ENCODE measurements at regions of chr18 and their contacts with region 1.

Region 1: DNA sequence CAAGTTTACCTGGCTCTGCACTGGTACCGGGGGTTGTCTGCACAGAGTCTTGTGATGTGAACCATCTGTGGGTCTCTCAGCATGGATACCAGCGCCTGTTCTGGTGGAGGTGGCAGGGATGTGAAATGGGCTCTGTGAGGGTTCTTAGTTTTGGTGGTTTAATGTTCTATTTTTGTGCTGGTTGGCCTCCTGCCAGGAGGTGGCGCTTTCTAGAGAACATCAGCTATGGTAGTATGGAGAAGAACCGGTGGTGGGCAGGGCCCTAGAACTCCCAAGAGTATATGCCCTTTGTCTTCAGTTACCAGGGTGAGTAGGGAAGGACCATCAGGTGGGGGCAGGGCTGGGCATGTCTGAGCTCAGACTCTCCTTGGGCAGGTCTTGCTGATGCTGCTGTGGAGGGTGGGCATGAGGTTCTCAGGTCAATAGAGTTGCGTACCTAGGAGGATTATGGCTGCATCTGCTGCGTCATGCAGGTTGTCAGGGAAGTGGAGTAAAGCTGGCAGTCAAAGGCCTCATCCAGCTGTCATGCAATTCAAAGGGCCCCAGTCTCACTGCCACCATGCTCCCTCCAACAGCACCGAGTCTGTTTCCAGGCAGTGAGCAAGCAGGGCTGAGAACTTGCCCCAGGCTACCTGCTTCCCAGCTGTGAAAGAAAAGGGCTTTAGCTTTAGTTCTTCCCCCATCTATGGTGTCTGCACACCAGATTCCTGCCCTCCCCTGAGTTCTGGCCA is 278.0 kb downstream of the METTL4 start:
- DNase-seq: no peak
- ATAC-seq: no peak
- H3K4me3 ChIP-seq: no peak overlapping the region
- H3K27ac ChIP-seq: no peak overlapping the region
- H3K4me1 ChIP-seq: no peaks in the 10 kb centered on the region
- H3K27me3 ChIP-seq: no peaks in the 10 kb centered on the region
- CTCF ChIP-seq: no peak

Region 2: GRCh38 chr18:2237706-2238105 is 55.6 kb before region 1 on chr18:
- intact Hi-C with region 1: loop called in 1 of 3 experiments (anchors 10 kb)
- DNase-seq: no peak
- ATAC-seq: no peak
- H3K4me3 ChIP-seq: no peak overlapping the region
- H3K27ac ChIP-seq: no peak overlapping the region
- H3K4me1 ChIP-seq: no peaks in the 10 kb centered on the region
- H3K27me3 ChIP-seq: peaks cover 0 to 4% (median 2%) of the 10 kb centered on the region in 4 donors
- CTCF ChIP-seq: no peak